PC-9 (cell line): ENCODE measurements at regions of chr3 and their contacts with region 1.

Region 1: GRCh38 chr3:149324332-149324731 is 9.1 kb downstream of the TM4SF18 start:
- DNase-seq: no peak
- H3K4me3 ChIP-seq: no peak overlapping the region
- H3K27ac ChIP-seq: no peak overlapping the region
- H3K4me1 ChIP-seq: no peaks in the 10 kb centered on the region
- H3K27me3 ChIP-seq: no peaks in the 10 kb centered on the region
- CTCF ChIP-seq: no peak

Region 2: GRCh38 chr3:149104516-149104915 is 219.8 kb before region 1 on chr3:
- CTCF ChIA-PET with region 1: no interaction called
- POLR2A ChIA-PET with region 1: no interaction called
- intact Hi-C with region 1: no loop called
- DNase-seq: no peak
- H3K4me3 ChIP-seq: no peak overlapping the region
- H3K27ac ChIP-seq: no peak overlapping the region
- H3K4me1 ChIP-seq: no peaks in the 10 kb centered on the region; the same call in 1 of the 2 replicates
- H3K27me3 ChIP-seq: no peaks in the 10 kb centered on the region
- CTCF ChIP-seq: no peak

Region 3: GRCh38 chr3:149430216-149430615 is 105.9 kb after region 1 on chr3:
- CTCF ChIA-PET with region 1: no interaction called
- POLR2A ChIA-PET with region 1: interaction called, 21 read pairs
- intact Hi-C with region 1: no loop called
- DNase-seq: no peak
- H3K4me3 ChIP-seq: no peak overlapping the region
- H3K27ac ChIP-seq: no peak overlapping the region
- H3K4me1 ChIP-seq: no peaks in the 10 kb centered on the region
- H3K27me3 ChIP-seq: no peaks in the 10 kb centered on the region
- CTCF ChIP-seq: no peak